Prostate gland (tissue), 2 donors: ENCODE measurements at regions of chr2 and their contacts with region 1.

Region 1: GRCh38 chr2:224650815-224651439 is 65.2 kb downstream of the CCDC195 start:
- DNase-seq: peak; percentile 28
- H3K4me3 ChIP-seq: no peak overlapping the region
- H3K27ac ChIP-seq: no peak overlapping the region
- H3K4me1 ChIP-seq: no peaks in the 10 kb centered on the region
- H3K27me3 ChIP-seq: no peaks in the 10 kb centered on the region
- CTCF ChIP-seq: peak; percentile 55 to 74 (median 68)
- POLR2A ChIP-seq: no peak

Region 2: DNA sequence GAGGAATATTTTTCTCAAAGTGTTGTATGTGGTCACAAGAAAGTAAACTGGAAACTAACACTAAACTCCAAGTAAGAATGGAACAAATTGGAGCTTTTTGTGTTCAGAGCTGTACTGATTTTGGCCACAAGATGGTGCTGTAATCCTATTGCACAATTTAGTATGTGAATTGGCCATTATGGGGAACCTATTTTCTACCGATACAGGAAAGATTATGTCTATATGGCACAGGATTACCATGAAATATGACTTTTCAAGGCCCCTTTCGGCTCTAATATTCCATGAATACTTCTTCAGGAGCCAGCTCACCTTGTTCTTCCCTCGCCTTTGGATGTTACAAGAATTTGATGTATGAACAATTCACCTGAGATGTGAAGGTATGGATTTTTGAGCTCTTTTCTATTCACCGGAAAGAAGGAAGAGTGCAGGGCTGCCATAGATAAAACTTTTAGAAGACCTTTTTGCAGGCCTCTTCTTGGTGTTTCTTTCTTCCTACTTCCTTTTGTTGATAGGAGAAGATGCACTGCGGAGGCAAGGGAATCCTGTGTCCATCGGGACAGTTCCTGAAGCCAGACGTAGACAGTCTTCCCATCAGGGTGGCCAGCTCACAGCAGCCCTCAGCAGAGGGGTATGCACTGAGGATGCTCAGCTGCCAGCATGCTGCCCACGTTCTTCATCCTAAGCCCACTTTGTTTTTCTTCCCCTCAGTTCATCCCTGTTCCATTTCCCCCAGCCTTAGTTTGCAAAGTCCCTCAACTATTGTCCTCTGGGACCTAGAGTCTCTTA is 680.4 kb before region 1 on chr2:
- intact Hi-C with region 1: loop called (anchors 5 kb)
- DNase-seq: peak; percentile 46
- H3K4me3 ChIP-seq: no peak overlapping the region
- H3K27ac ChIP-seq: no peak overlapping the region
- H3K4me1 ChIP-seq: no peaks in the 10 kb centered on the region
- H3K27me3 ChIP-seq: no peaks in the 10 kb centered on the region
- CTCF ChIP-seq: peak; percentile 69 to 91 (median 88)
- POLR2A ChIP-seq: no peak

Region 3: GRCh38 chr2:224357098-224357901 is 293.6 kb before region 1 on chr2:
- intact Hi-C with region 1: loop called (anchors 2 kb)
- DNase-seq: peak; percentile 43
- H3K4me3 ChIP-seq: no peak overlapping the region
- H3K27ac ChIP-seq: no peak overlapping the region
- H3K4me1 ChIP-seq: no peaks in the 10 kb centered on the region
- H3K27me3 ChIP-seq: no peaks in the 10 kb centered on the region
- CTCF ChIP-seq: peak; percentile 56 to 83 (median 80)
- POLR2A ChIP-seq: no peak

Region 4: GRCh38 chr2:224449212-224450147 is 201.4 kb before region 1 on chr2:
- intact Hi-C with region 1: loop called (anchors 10 kb)
- DNase-seq: no peak
- H3K4me3 ChIP-seq: no peak overlapping the region
- H3K27ac ChIP-seq: no peak overlapping the region
- H3K4me1 ChIP-seq: no peaks in the 10 kb centered on the region
- H3K27me3 ChIP-seq: no peaks in the 10 kb centered on the region
- CTCF ChIP-seq: peak in 2 of 4 experiments; percentile 42 to 46
- POLR2A ChIP-seq: no peak

Region 5: DNA sequence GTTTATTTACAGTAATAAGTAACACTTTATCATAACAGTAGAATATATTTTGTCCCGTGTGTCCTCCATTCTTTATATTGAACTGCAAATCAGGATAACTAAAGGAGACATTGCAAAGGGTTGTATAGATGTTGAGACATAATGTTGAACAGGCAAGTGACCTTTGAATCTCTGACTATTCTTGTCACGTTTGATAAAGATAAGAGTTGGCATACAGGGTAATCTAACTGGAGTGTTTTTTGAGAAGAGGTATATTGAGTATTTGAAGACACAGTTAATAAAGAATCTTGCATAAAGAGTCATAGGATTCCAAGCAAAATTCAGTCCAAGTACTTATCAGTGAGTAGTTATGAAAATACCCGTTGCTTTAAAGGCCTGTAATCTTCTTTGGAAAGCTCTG is 43.6 kb after region 1 on chr2:
- intact Hi-C with region 1: no loop called
- DNase-seq: no peak
- H3K4me3 ChIP-seq: no peak overlapping the region
- H3K27ac ChIP-seq: no peak overlapping the region
- H3K4me1 ChIP-seq: no peaks in the 10 kb centered on the region
- H3K27me3 ChIP-seq: no peaks in the 10 kb centered on the region
- CTCF ChIP-seq: no peak
- POLR2A ChIP-seq: no peak